Activated CD8-positive, alpha-beta T cell treated with anti-CD3 and anti-CD28 coated beads for 36 hours (primary cell): ENCODE measurements at regions of chr4 and their contacts with region 1.

Region 1: GRCh38 chr4:47686294-47686872 is 151.5 kb downstream of the CORIN start:
- DNase-seq: peak; percentile 81
- ATAC-seq: peak; percentile 92
- H3K4me3 Mint-ChIP-seq: no peak overlapping the region
- H3K27ac Mint-ChIP-seq: no peak overlapping the region
- H3K4me1 Mint-ChIP-seq: no peaks in the 10 kb centered on the region
- H3K27me3 Mint-ChIP-seq: peaks cover 3% of the 10 kb centered on the region
- CTCF ChIP-seq: peak; percentile 93

Region 2: GRCh38 chr4:47933840-47934239 is 247.5 kb after region 1 on chr4:
- CTCF ChIA-PET with region 1: interaction called, 16 read pairs
- POLR2A ChIA-PET with region 1: no interaction called
- intact Hi-C with region 1: loop called (anchors 5 kb)
- DNase-seq: no peak
- ATAC-seq: peak; percentile 77
- H3K4me3 Mint-ChIP-seq: no peak overlapping the region
- H3K27ac Mint-ChIP-seq: no peak overlapping the region
- H3K4me1 Mint-ChIP-seq: peaks cover 5% of the 10 kb centered on the region
- H3K27me3 Mint-ChIP-seq: no peaks in the 10 kb centered on the region
- CTCF ChIP-seq: peak; percentile 76